ENCODE measurements at regions of chr9 and their contacts with region 1.

Region 1: GRCh38 chr9:125815568-125815967 is 68.4 kb downstream of the PBX3 start:
- DNase-seq: no peak
- H3K4me3 ChIP-seq: no peak overlapping the region
- H3K27ac ChIP-seq: no peak overlapping the region
- H3K4me1 ChIP-seq: peaks cover 9% of the 10 kb centered on the region
- H3K27me3 ChIP-seq: no peaks in the 10 kb centered on the region
- CTCF ChIP-seq: no peak

Region 2: DNA sequence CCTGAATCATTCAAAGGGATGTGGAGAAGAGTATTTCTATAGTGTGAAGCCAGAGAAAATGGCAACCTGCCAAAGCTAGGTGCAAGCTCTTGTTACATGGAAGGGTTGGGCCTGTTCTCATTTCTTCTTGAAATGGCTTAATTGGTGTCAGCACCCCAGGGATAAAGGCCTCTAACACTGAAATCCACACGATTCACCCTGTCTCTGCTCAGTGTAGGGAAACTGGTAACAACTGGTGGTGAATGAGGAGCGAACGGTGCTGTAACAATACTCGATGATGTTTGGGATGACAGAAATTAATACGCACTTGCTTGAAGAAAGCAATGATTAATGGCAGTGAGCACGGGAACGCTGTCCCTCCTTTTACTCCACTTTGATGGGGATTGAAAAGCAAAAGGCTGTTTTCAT is 52.2 kb before region 1 on chr9:
- intact Hi-C with region 1: loop called (anchors 10 kb)
- DNase-seq: no peak
- H3K4me3 ChIP-seq: peak overlapping the region; percentile 13
- H3K27ac ChIP-seq: peak overlapping the region; percentile 20
- H3K4me1 ChIP-seq: peaks cover 60% of the 10 kb centered on the region
- H3K27me3 ChIP-seq: no peaks in the 10 kb centered on the region
- CTCF ChIP-seq: no peak

Measured in left ventricle myocardium inferior (tissue), 1 donor.